Calu3 (cell line): ENCODE measurements at regions of chr11 and their contacts with region 1.

Region 1: DNA sequence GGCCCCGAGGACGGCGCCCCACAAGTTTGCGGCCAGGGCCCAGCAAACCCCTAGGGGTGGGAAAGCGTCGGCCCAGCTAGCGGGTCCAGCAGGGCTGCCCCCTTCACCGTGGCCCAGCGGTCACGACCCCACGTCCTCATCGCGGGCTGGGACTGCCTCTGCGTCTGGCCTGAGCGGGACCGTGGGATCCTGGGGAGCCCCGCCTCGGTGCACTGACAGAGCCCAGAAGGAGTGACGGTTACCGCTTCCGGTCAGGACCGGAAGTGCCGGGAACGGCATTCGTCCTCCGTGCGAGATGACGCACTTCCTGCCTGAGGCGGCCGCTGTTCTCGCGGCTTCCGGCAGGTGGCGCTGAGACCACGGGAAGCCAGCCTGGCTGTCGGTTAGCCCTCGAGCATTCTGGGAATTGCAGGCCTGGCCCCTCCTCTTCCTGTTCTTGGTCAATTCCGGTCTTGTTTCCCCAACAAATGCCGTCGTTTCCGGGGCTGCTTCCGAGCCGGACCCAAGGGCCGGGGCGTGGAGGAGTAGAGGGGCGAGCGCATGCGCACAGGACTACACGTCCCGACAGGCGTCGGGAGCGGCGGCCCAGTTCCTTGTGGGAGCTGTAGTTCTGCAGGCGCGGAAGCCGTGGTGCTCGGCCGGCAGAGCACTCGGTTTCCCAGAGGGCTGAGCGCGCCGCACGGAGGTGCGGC is at the start of gene TSSC4:
- DNase-seq: peak; percentile 98
- H3K4me3 Mint-ChIP-seq: peak within 1 kb of the TSS; percentile 98
- H3K27ac Mint-ChIP-seq: peak within 1 kb of the TSS; percentile 91
- H3K4me1 Mint-ChIP-seq: no peaks in the 10 kb centered on the region
- H3K27me3 Mint-ChIP-seq: no peaks in the 10 kb centered on the region
- CTCF ChIP-seq: peak; percentile 92
- total RNA-seq, gene TSSC4: 49.4 and 51.9 TPM in 2 replicates

Region 2: GRCh38 chr11:2305140-2305840 is 94.9 kb before region 1 on chr11:
- CTCF ChIA-PET with region 1: interaction called, 23 read pairs
- intact Hi-C with region 1: no loop called
- DNase-seq: peak; percentile 90
- H3K4me3 Mint-ChIP-seq: no peak overlapping the region
- H3K27ac Mint-ChIP-seq: no peak overlapping the region
- H3K4me1 Mint-ChIP-seq: no peaks in the 10 kb centered on the region
- H3K27me3 Mint-ChIP-seq: peaks cover 35% of the 10 kb centered on the region
- CTCF ChIP-seq: peak; percentile 79

Region 3: GRCh38 chr11:2325719-2326118 is 74.5 kb before region 1 on chr11:
- CTCF ChIA-PET with region 1: interaction called, 10 read pairs
- intact Hi-C with region 1: no loop called
- DNase-seq: no peak
- H3K4me3 Mint-ChIP-seq: no peak overlapping the region
- H3K27ac Mint-ChIP-seq: no peak overlapping the region
- H3K4me1 Mint-ChIP-seq: no peaks in the 10 kb centered on the region
- H3K27me3 Mint-ChIP-seq: peaks cover 69% of the 10 kb centered on the region
- CTCF ChIP-seq: no peak